OCI-LY7 (cell line): ENCODE measurements at regions of chr12 and their contacts with region 1.

Region 1: DNA sequence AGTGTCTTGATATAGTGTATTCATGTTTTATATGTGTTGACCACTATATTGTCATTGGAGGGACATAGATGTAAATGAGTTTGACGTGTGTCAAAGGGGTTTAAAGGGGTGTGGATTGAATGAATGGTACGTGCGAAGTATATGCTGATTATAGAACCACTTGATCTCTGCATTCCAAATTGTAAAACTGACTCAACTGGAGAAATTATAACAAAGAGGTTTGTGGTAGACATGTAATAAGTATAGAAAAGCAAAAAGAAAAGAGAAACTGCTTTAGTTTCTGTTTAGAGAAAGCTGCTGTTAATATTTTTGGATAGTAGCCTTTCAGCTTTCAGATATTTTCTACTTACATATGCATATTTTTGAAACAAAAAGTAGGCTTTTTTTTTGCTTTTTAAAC is 8.9 kb upstream of the MYRFL start:
- DNase-seq: no peak
- H3K4me3 ChIP-seq: no peak overlapping the region
- H3K27ac ChIP-seq: no peak overlapping the region
- H3K4me1 ChIP-seq: no peaks in the 10 kb centered on the region
- CTCF ChIP-seq: no peak

Region 2: GRCh38 chr12:69792533-69792932 is 23.5 kb before region 1 on chr12:
- CTCF ChIA-PET with region 1: no interaction called
- POLR2A ChIA-PET with region 1: interaction called, 10 read pairs
- intact Hi-C with region 1: no loop called
- DNase-seq: no peak
- H3K4me3 ChIP-seq: no peak overlapping the region
- H3K27ac ChIP-seq: no peak overlapping the region
- H3K4me1 ChIP-seq: no peaks in the 10 kb centered on the region
- CTCF ChIP-seq: no peak

Region 3: GRCh38 chr12:69932676-69933552 is 116.8 kb after region 1 on chr12:
- CTCF ChIA-PET with region 1: no interaction called
- POLR2A ChIA-PET with region 1: no interaction called
- intact Hi-C with region 1: no loop called
- DNase-seq: no peak
- H3K4me3 ChIP-seq: no peak overlapping the region
- H3K27ac ChIP-seq: no peak overlapping the region
- H3K4me1 ChIP-seq: peaks cover 13% of the 10 kb centered on the region
- CTCF ChIP-seq: no peak